K562 (cell line): ENCODE measurements at regions of chr14 and their contacts with region 1.

Region 1: DNA sequence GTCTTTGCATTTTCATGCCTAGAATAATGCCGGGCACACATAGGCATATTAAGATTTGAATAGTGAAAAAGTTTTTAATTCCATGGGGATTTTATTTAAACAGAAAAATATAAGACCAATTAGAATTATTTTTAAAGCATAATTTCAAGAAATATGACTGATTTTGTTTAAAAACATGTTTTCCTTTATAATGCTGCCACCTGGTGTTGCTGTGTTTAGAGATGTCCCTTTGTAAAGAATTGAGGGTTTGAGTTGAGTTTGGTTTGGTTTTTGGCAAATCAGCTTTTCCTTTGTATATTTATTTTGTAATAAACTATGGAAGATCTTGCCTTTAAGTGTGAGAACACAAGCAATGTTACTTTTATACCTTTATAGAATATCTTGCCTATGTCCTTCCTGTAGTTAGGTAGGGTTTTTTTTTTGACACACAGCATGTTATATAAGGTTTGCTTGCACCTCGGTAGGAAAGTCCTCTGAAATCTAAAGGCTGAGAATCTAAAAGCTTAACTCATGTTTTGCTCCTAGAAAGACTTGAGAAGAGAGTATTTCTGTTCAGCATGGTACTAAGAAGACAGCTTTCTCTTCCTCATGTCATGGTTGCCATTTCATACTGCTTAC is 31.4 kb upstream of the SNAPC1 start:
- DNase-seq: no peak
- ATAC-seq: no peak
- H3K4me3 ChIP-seq: no peak overlapping the region
- H3K27ac ChIP-seq: no peak overlapping the region
- H3K4me1 ChIP-seq: no peaks in the 10 kb centered on the region
- H3K27me3 ChIP-seq: no peaks in the 10 kb centered on the region
- CTCF ChIP-seq: peak in 2 of 3 experiments; percentile 11 to 38; a peak in 3 of 6 replicates
- EP300 ChIP-seq: no peak
- POLR2A ChIP-seq: no peak
- RAD21 ChIP-seq: peak; percentile 46 to 63; a peak in 3 of 4 replicates

Region 2: GRCh38 chr14:61461808-61462275 is 269.0 kb before region 1 on chr14:
- CTCF ChIA-PET with region 1: interaction called, 10 read pairs
- POLR2A ChIA-PET with region 1: no interaction called
- in situ Hi-C with region 1: loop called (anchors 10 kb)
- intact Hi-C with region 1: loop called (anchors 2 kb)
- DNase-seq: peak; percentile 43 to 60 (median 54)
- ATAC-seq: peak; percentile 86
- H3K4me3 ChIP-seq: no peak overlapping the region
- H3K27ac ChIP-seq: no peak overlapping the region
- H3K4me1 ChIP-seq: peaks cover 4 to 19% of the 10 kb centered on the region in 2 experiments; a peak in 4 of 5 replicates
- H3K27me3 ChIP-seq: no peaks in the 10 kb centered on the region; a peak in 1 of 5 replicates
- CTCF ChIP-seq: peak; percentile 47 to 65 (median 55); a peak in 5 of 6 replicates
- EP300 ChIP-seq: no peak
- POLR2A ChIP-seq: no peak
- RAD21 ChIP-seq: peak; percentile 78 to 81

Region 3: DNA sequence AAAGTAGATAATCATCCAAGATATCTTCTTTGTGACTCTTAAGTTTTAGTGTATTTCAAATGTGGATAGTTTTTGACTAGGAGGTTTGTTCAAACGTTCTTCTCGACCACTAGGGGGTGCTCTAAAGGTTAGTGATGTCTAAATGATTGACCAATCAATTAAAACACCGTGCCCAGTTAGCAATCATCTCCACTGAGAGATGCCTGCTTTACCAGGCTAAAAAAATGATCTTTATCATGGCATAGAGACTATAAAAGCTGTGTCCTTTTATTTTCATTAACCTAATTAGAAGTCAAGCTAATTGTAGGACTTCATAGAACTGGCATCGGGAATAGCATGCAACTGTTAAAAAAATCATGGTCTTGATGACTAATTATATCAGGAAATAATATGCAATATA is 255.5 kb before region 1 on chr14:
- CTCF ChIA-PET with region 1: interaction called, 4 read pairs
- POLR2A ChIA-PET with region 1: no interaction called
- in situ Hi-C with region 1: no loop called
- intact Hi-C with region 1: loop called (anchors 5 kb)
- DNase-seq: peak; percentile 38 to 48 (median 45)
- ATAC-seq: peak; percentile 62; the same call in 2 of the 3 replicates
- H3K4me3 ChIP-seq: no peak overlapping the region
- H3K27ac ChIP-seq: no peak overlapping the region
- H3K4me1 ChIP-seq: peaks cover 0 to 3% of the 10 kb centered on the region in 2 experiments; a peak in 1 of 5 replicates
- H3K27me3 ChIP-seq: no peaks in the 10 kb centered on the region
- CTCF ChIP-seq: peak; percentile 9 to 59 (median 52); a peak in 5 of 6 replicates
- EP300 ChIP-seq: no peak
- POLR2A ChIP-seq: no peak
- RAD21 ChIP-seq: peak; percentile 28 to 72

Region 4: GRCh38 chr14:61694830-61695694 is 35.8 kb before region 1 on chr14 and contains the start of gene HIF1A:
- CTCF ChIA-PET with region 1: no interaction called
- POLR2A ChIA-PET with region 1: no interaction called
- in situ Hi-C with region 1: no loop called
- intact Hi-C with region 1: no loop called
- DNase-seq: peak; percentile 95 to 96 (median 96)
- ATAC-seq: peak; percentile 89
- H3K4me3 ChIP-seq: peak within 1 kb of the TSS; percentile 84
- H3K27ac ChIP-seq: peak within 1 kb of the TSS; percentile 88
- H3K4me1 ChIP-seq: peaks cover 0 to 12% of the 10 kb centered on the region in 2 experiments; a peak in 3 of 5 replicates
- H3K27me3 ChIP-seq: no peaks in the 10 kb centered on the region
- CTCF ChIP-seq: no peak; a peak in 1 of 6 replicates
- EP300 ChIP-seq: no peak
- POLR2A ChIP-seq: peak; percentile 89
- RAD21 ChIP-seq: 0 out of 4 replicates have a peak, but pooled peaks of 1 of the 2 experiments have one; percentile 14
- polyA plus RNA-seq, gene HIF1A: 5.9 to 7.5 TPM